ENCODE measurements at regions of chr1 and their contacts with region 1.

Region 1: DNA sequence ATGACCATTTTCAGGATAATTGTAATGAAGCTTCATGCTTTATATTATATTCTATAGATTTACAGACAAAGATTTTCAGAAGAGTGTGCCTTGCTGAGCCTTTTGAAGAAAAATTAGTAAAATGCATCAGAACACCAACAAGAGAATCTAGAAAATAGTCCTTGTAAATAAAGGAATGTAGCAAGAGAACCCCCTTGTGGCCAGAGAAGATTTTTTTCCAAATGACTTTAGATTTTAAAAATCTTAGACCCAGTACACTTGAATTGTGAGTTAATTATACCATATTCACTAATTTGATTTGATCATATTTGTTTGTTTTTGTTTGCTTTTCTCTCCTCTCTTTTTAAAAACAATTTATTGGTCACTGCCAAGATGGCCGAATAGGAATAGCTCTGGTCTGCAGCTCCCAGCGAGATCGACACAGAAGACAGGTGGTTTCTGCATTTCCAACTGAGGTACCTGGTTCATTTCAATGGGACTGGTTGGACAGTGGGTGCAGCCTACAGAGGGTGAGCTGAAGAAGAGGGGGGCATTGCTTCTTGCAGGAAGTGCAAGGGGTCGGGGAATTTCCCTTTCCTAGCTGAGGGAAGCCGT is 12.8 kb upstream of the IFI44L start:
- DNase-seq: peak; percentile 43
- H3K4me3 Mint-ChIP-seq: no peak overlapping the region
- H3K27ac Mint-ChIP-seq: peak overlapping the region; percentile 59
- H3K4me1 Mint-ChIP-seq: no peaks in the 10 kb centered on the region
- H3K27me3 Mint-ChIP-seq: no peaks in the 10 kb centered on the region
- CTCF ChIP-seq: peak; percentile 54

Region 2: GRCh38 chr1:78132174-78132947 is 475.1 kb before region 1 on chr1:
- CTCF ChIA-PET with region 1: interaction called, 148 read pairs
- POLR2A ChIA-PET with region 1: interaction called, 18 read pairs
- intact Hi-C with region 1: loop called (anchors 1 kb)
- DNase-seq: no peak
- H3K4me3 Mint-ChIP-seq: no peak overlapping the region
- H3K27ac Mint-ChIP-seq: no peak overlapping the region
- H3K4me1 Mint-ChIP-seq: no peaks in the 10 kb centered on the region
- H3K27me3 Mint-ChIP-seq: no peaks in the 10 kb centered on the region
- CTCF ChIP-seq: no peak

Region 3: GRCh38 chr1:78237364-78237916 is 370.0 kb before region 1 on chr1:
- CTCF ChIA-PET with region 1: interaction called, 4 read pairs
- POLR2A ChIA-PET with region 1: no interaction called
- intact Hi-C with region 1: loop called (anchors 10 kb)
- DNase-seq: peak; percentile 94
- H3K4me3 Mint-ChIP-seq: no peak overlapping the region
- H3K27ac Mint-ChIP-seq: peak overlapping the region; percentile 76
- H3K4me1 Mint-ChIP-seq: peaks cover 40% of the 10 kb centered on the region
- H3K27me3 Mint-ChIP-seq: no peaks in the 10 kb centered on the region
- CTCF ChIP-seq: no peak

Region 4: GRCh38 chr1:78333502-78333901 is 273.9 kb before region 1 on chr1:
- CTCF ChIA-PET with region 1: interaction called, 4 read pairs
- POLR2A ChIA-PET with region 1: no interaction called
- intact Hi-C with region 1: loop called (anchors 5 kb)
- DNase-seq: peak; percentile 45
- H3K4me3 Mint-ChIP-seq: no peak overlapping the region
- H3K27ac Mint-ChIP-seq: no peak overlapping the region
- H3K4me1 Mint-ChIP-seq: no peaks in the 10 kb centered on the region
- H3K27me3 Mint-ChIP-seq: no peaks in the 10 kb centered on the region
- CTCF ChIP-seq: peak; percentile 56

Region 5: GRCh38 chr1:78617615-78618026 is 10.2 kb after region 1 on chr1:
- CTCF ChIA-PET with region 1: interaction called, 30 read pairs
- POLR2A ChIA-PET with region 1: interaction called, 3 read pairs
- intact Hi-C with region 1: no loop called
- DNase-seq: peak; percentile 88
- H3K4me3 Mint-ChIP-seq: no peak overlapping the region
- H3K27ac Mint-ChIP-seq: no peak overlapping the region
- H3K4me1 Mint-ChIP-seq: peaks cover 22% of the 10 kb centered on the region
- H3K27me3 Mint-ChIP-seq: no peaks in the 10 kb centered on the region
- CTCF ChIP-seq: peak; percentile 82

Region 6: GRCh38 chr1:78649628-78650027 is 42.2 kb after region 1 on chr1 and contains the start of gene IFI44:
- CTCF ChIA-PET with region 1: no interaction called
- POLR2A ChIA-PET with region 1: no interaction called
- intact Hi-C with region 1: no loop called
- DNase-seq: peak; percentile 81
- H3K4me3 Mint-ChIP-seq: no peak within 1 kb of the TSS
- H3K27ac Mint-ChIP-seq: no peak within 1 kb of the TSS
- H3K4me1 Mint-ChIP-seq: no peaks in the 10 kb centered on the region
- H3K27me3 Mint-ChIP-seq: no peaks in the 10 kb centered on the region
- CTCF ChIP-seq: no peak
- total RNA-seq, gene IFI44: 7.5 and 7.7 TPM in 2 replicates

Measured in MCF 10A (cell line).